ENCODE measurements at regions of chr17 and their contacts with region 1.

Region 1: GRCh38 chr17:30104575-30105339 is 11.9 kb upstream of the NSRP1 start:
- DNase-seq: peak; percentile 72
- H3K4me3 Mint-ChIP-seq: peak overlapping the region; percentile 70
- H3K27ac Mint-ChIP-seq: no peak overlapping the region
- H3K4me1 Mint-ChIP-seq: peaks cover 8% of the 10 kb centered on the region
- H3K27me3 Mint-ChIP-seq: no peaks in the 10 kb centered on the region
- CTCF ChIP-seq: peak; percentile 68

Region 2: GRCh38 chr17:30062372-30062771 is 42.4 kb before region 1 on chr17:
- CTCF ChIA-PET with region 1: no interaction called
- intact Hi-C with region 1: no loop called
- DNase-seq: no peak
- H3K4me3 Mint-ChIP-seq: no peak overlapping the region
- H3K27ac Mint-ChIP-seq: no peak overlapping the region
- H3K4me1 Mint-ChIP-seq: no peaks in the 10 kb centered on the region
- H3K27me3 Mint-ChIP-seq: peaks cover 50% of the 10 kb centered on the region
- CTCF ChIP-seq: no peak

Region 3: DNA sequence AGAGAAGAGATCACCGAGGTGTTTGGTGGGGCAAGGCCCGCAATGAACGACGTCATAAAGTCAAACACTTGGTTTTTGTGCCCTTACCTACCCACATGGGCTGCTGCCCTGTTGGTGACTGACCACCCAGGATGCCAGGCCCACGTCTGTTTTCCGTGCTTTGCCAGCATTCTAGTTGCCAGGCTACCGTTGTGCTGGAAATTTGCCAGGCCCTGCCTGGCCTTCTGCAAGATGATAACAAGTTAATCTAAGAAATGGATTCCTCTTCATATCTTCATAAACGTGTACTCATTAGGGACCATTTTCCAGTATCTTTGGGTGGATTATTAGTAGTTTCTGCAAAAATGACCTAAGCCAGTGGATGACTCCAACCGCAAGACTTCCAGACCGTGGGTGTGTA is 95.3 kb after region 1 on chr17:
- CTCF ChIA-PET with region 1: no interaction called
- intact Hi-C with region 1: no loop called
- DNase-seq: no peak
- H3K4me3 Mint-ChIP-seq: no peak overlapping the region
- H3K27ac Mint-ChIP-seq: no peak overlapping the region
- H3K4me1 Mint-ChIP-seq: no peaks in the 10 kb centered on the region
- H3K27me3 Mint-ChIP-seq: no peaks in the 10 kb centered on the region
- CTCF ChIP-seq: no peak

Region 4: DNA sequence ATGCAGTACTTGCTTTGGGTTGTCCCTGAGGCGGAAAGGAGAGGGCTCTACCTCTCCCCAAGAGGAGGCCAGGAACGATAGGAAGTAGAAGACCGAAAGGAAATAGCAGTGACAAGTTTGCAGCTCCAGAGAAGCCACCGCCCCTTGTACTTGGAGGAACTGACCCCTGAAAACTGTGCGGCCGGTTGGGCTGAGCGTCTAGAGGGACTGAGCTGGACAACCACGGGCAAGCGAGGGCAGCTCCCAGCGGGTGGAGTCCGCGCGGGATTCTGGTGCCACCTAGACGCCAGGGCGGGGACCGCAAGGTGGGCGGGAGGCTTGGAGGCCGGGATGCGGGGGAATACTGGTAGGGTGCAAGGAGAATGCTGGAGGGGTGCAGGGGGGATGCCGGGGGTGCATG is 132.0 kb after region 1 on chr17:
- CTCF ChIA-PET with region 1: interaction called, 29 read pairs
- intact Hi-C with region 1: loop called (anchors 5 kb)
- DNase-seq: peak; percentile 81
- H3K4me3 Mint-ChIP-seq: peak overlapping the region; percentile 77
- H3K27ac Mint-ChIP-seq: no peak overlapping the region
- H3K4me1 Mint-ChIP-seq: no peaks in the 10 kb centered on the region
- H3K27me3 Mint-ChIP-seq: peaks cover 76% of the 10 kb centered on the region
- CTCF ChIP-seq: peak; percentile 40

Region 5: DNA sequence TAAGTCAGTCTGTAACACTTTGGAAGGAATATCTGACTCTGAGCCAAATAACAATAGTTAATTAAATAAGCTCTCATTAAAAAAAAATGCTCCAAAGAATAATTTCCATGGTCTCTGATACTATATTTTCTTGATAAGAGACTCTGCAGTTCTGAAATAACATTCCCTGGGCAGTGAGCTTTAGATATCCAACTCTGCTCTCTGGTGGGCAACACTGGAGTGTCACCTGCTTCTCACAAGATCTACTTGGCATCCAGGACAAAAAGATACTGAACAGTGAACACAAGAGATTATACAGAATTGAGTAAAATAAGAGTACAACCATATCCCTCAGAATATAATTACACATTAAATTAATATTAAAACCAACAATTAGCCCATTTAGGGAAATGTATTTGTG is 173.3 kb after region 1 on chr17:
- CTCF ChIA-PET with region 1: interaction called, 4 read pairs
- intact Hi-C with region 1: loop called (anchors 1 kb)
- DNase-seq: no peak
- H3K4me3 Mint-ChIP-seq: no peak overlapping the region
- H3K27ac Mint-ChIP-seq: no peak overlapping the region
- H3K4me1 Mint-ChIP-seq: no peaks in the 10 kb centered on the region
- H3K27me3 Mint-ChIP-seq: no peaks in the 10 kb centered on the region
- CTCF ChIP-seq: no peak

Region 6: DNA sequence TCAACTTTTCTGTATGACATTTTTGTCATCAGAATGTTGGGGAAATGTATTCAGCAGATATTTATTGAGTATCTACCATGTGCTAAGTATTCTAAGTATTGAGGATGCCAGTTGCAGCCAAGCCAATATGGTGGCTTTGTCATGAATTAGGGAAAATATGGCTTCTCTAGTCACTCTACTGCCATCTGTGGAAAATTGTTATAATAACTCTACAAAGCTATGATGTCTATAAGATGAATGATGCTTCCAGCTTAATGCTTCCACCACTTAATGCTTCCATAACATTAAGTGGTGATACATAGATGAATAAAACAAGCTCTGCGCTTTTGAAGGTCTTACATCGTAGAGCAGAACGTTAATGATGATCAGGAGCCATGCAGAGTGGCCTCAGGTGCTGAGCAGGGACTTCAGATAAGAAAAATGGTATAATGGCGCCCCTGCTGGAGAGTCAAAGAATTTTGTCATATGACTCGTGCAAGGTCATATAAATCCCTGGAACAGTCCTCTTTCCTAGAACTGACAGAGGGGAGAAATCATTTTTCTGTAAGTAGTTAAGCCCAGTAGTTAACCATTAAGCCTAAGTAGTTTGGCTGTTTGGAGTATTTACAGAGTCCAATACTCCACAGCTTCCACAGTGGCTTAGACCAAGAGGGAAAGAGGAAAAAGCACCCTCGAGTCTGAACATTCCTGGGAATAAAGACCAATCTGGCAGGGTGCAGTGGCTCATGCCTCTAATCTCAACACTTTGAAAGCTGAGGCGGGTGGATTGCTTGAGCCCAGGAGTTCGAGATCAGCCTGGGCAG is 231.8 kb after region 1 on chr17:
- CTCF ChIA-PET with region 1: interaction called, 27 read pairs
- intact Hi-C with region 1: loop called (anchors 1 kb)
- DNase-seq: peak; percentile 63
- H3K4me3 Mint-ChIP-seq: no peak overlapping the region
- H3K27ac Mint-ChIP-seq: no peak overlapping the region
- H3K4me1 Mint-ChIP-seq: peaks cover 16% of the 10 kb centered on the region
- H3K27me3 Mint-ChIP-seq: no peaks in the 10 kb centered on the region
- CTCF ChIP-seq: peak; percentile 71

Measured in Calu3 (cell line).